ENCODE measurements at regions of chr1 and their contacts with region 1.

Region 1: GRCh38 chr1:8374812-8375211 is 56.9 kb downstream of the SLC45A1 start:
- DNase-seq: peak in 1 of 3 donors; percentile 55
- ATAC-seq: no peak
- H3K4me3 ChIP-seq: no peak overlapping the region
- H3K27ac ChIP-seq: peak overlapping the region; percentile 45
- H3K4me1 ChIP-seq: peaks cover 58% of the 10 kb centered on the region
- H3K27me3 ChIP-seq: no peaks in the 10 kb centered on the region

Region 2: DNA sequence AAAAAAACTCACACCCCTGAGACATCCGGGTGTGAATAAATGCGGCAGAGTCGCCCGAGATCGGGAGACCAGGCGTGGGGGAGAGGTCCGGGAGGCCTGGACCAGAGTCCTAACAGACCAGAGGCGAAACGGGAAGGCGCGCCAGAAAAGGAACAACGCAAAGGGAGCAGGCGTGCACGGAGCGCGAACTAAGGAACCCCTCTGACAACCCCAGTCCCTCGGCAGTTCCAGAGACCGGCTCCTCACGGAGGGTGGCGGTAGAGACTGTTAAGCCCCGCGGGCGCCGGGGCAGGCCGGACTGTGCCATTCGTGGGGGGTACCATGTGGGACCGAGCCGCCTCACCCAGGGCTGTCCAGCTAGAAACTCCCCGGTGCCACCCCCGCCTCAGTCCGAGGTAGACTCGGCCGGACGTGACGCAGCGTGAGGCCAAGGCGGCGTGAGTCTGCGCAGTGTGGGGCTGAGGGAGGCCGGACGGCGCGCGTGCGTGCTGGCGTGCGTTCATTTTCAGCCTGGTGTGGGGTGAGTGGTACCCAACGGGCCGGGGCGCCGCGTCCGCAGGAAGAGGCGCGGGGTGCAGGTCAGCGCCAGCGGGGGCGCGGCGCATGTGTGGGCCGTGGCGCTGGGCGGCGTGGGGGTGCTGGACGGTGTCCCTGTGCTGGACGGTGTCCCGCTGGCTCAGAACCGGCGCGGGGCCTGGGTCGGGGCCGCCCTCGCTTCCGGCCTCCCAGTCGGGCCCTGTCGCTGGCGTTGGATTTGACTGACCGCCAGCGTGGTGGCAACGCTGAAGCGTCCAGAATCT is 413.4 kb before region 1 on chr1 and contains the start of gene PARK7:
- intact Hi-C with region 1: no loop called
- DNase-seq: peak; percentile 100
- ATAC-seq: peak; percentile 97
- H3K4me3 ChIP-seq: peak within 1 kb of the TSS; percentile 65
- H3K27ac ChIP-seq: peak within 1 kb of the TSS; percentile 93
- H3K4me1 ChIP-seq: no peaks in the 10 kb centered on the region
- H3K27me3 ChIP-seq: no peaks in the 10 kb centered on the region
- total RNA-seq, gene PARK7: 302 to 323 (median 314) TPM

Region 3: GRCh38 chr1:8015036-8015808 is 359.6 kb before region 1 on chr1:
- intact Hi-C with region 1: no loop called
- DNase-seq: no peak
- ATAC-seq: peak; percentile 77 to 84
- H3K4me3 ChIP-seq: peak overlapping the region; percentile 23
- H3K27ac ChIP-seq: peak overlapping the region; percentile 79
- H3K4me1 ChIP-seq: peaks cover 6% of the 10 kb centered on the region
- H3K27me3 ChIP-seq: no peaks in the 10 kb centered on the region

Region 4: GRCh38 chr1:8412183-8412831 is 37.5 kb after region 1 on chr1:
- intact Hi-C with region 1: loop called in 1 of 4 experiments (anchors 5 kb)
- DNase-seq: peak in 2 of 3 donors; percentile 56 to 72
- ATAC-seq: peak; percentile 54 to 72
- H3K4me3 ChIP-seq: no peak overlapping the region
- H3K27ac ChIP-seq: peak overlapping the region; percentile 78
- H3K4me1 ChIP-seq: peaks cover 36% of the 10 kb centered on the region
- H3K27me3 ChIP-seq: no peaks in the 10 kb centered on the region